Heart left ventricle (tissue), 16 donors: ENCODE measurements at regions of chr10 and their contacts with region 1.

Region 1: DNA sequence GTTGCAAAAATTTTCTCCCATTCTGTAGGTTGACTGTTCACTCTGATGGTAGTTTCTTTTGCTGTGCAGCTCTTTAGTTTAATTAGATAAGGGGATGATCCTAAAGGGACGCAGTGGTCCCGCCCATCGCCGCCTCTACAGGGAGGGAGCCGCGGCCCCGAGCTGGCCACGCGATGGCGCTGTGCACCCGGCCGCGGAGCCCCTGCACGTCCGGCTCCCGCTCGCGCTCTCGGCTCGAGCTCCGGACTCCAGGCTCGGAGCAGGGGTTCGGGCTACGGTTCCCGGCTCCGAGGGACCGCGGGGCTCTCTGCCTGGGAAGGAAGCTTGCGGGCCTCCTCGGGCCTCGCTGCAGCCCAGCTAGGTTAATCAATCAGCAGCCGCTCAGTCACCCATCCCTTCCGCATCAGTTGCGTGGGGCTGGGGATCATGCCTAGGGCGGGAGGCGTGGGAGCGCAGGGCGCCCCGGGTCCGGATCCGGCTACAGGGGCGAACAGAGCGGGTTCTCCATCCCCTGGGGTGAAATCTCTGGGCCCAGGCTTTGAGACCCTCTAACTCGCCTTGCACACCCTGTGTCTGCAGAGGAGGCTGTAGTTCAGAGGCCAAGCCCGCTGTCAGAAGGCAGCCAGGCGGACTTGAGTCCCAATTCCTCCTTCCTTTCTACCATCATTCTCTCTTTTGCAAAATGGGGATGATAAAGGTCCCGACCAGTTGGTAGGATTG is 97.9 kb downstream of the WDR11 start:
- DNase-seq: peak; percentile 63 to 86 (median 70)
- ATAC-seq: peak; percentile 70 to 98 (median 96)
- H3K4me3 ChIP-seq: peak overlapping the region in 11 of 12 donors; percentile 28 to 58 (median 50)
- H3K27ac ChIP-seq: no peak overlapping the region
- H3K4me1 ChIP-seq: peaks cover 0 to 15% (median 10%) of the 10 kb centered on the region in 12 donors
- H3K27me3 ChIP-seq: peaks cover 0 to 51% (median 23%) of the 10 kb centered on the region in 9 donors
- CTCF ChIP-seq: peak; percentile 84 to 94 (median 88)
- POLR2A ChIP-seq: no peak

Region 2: GRCh38 chr10:121392657-121393056 is 443.6 kb after region 1 on chr10:
- intact Hi-C with region 1: no loop called
- DNase-seq: no peak
- ATAC-seq: no peak
- H3K4me3 ChIP-seq: no peak overlapping the region
- H3K27ac ChIP-seq: no peak overlapping the region
- H3K4me1 ChIP-seq: peaks cover 0 to 6% (median 0%) of the 10 kb centered on the region in 12 donors
- H3K27me3 ChIP-seq: peaks cover 0 to 4% (median 0%) of the 10 kb centered on the region in 9 donors
- CTCF ChIP-seq: no peak
- POLR2A ChIP-seq: no peak

Region 3: GRCh38 chr10:121481196-121481595 is 532.1 kb after region 1 on chr10:
- intact Hi-C with region 1: no loop called
- DNase-seq: no peak
- ATAC-seq: no peak
- H3K4me3 ChIP-seq: no peak overlapping the region
- H3K27ac ChIP-seq: no peak overlapping the region
- H3K4me1 ChIP-seq: no peaks in the 10 kb centered on the region
- H3K27me3 ChIP-seq: no peaks in the 10 kb centered on the region
- CTCF ChIP-seq: no peak
- POLR2A ChIP-seq: no peak

Region 4: GRCh38 chr10:121608469-121609190 is 659.6 kb after region 1 on chr10:
- intact Hi-C with region 1: loop called in 9 of 10 experiments (anchors 1 to 5 kb)
- DNase-seq: peak in 1 of 5 donors; percentile 34
- ATAC-seq: peak; percentile 57 to 94 (median 80)
- H3K4me3 ChIP-seq: peak overlapping the region in 9 of 12 donors; percentile 1 to 54 (median 35)
- H3K27ac ChIP-seq: no peak overlapping the region
- H3K4me1 ChIP-seq: peaks cover 0 to 7% (median 0%) of the 10 kb centered on the region in 12 donors
- H3K27me3 ChIP-seq: peaks cover 0 to 60% (median 18%) of the 10 kb centered on the region in 9 donors
- CTCF ChIP-seq: peak; percentile 71 to 90 (median 84)
- POLR2A ChIP-seq: no peak

Region 5: GRCh38 chr10:121734589-121735045 is 785.6 kb after region 1 on chr10:
- intact Hi-C with region 1: loop called in 6 of 10 experiments (anchors 5 kb)
- DNase-seq: no peak
- ATAC-seq: no peak
- H3K4me3 ChIP-seq: peak overlapping the region in 6 of 12 donors; percentile 7 to 45 (median 17)
- H3K27ac ChIP-seq: no peak overlapping the region
- H3K4me1 ChIP-seq: peaks cover 0 to 12% (median 5%) of the 10 kb centered on the region in 12 donors
- H3K27me3 ChIP-seq: peaks cover 0 to 34% (median 0%) of the 10 kb centered on the region in 9 donors
- CTCF ChIP-seq: peak; percentile 54 to 81 (median 69)
- POLR2A ChIP-seq: no peak

Region 6: DNA sequence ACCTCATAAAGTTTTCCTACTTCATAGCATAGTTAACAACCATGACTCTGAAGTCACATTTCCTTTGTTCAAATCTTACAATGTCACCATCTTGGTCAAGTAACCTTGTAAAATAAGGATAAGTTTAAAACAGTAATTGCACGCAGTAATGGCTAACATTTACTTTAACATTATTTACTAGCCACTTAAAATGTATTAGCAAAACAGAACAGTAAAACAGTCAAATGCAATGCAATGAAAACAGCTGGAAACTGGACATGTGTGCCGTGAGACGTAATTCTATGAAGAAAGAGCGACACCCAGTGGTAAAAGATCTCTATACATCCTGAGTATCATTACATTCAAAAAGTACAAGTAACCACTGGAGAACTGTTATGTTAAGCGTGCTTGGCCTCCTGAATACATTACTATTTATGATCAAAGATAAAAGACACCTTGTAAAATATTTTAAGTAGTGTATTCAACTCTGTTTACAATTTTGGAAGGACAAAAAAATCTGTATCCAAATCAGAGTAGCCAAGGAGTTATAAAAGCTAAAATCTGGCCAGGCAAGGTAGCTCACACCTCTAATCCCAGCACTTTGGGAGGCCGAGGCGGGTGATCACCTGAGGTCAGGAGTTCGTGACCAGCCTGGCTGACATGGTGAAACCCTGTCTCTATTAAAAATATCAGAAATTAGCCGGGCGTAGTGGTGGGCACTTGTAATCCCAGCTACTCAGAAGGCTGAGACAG is 951.6 kb after region 1 on chr10:
- intact Hi-C with region 1: loop called in 5 of 10 experiments (anchors 5 kb)
- DNase-seq: no peak
- ATAC-seq: peak in 3 of 4 donors; percentile 65 to 81 (median 72)
- H3K4me3 ChIP-seq: no peak overlapping the region
- H3K27ac ChIP-seq: no peak overlapping the region
- H3K4me1 ChIP-seq: peaks cover 0 to 7% (median 0%) of the 10 kb centered on the region in 12 donors
- H3K27me3 ChIP-seq: no peaks in the 10 kb centered on the region
- CTCF ChIP-seq: peak; percentile 54 to 78 (median 68)
- POLR2A ChIP-seq: no peak